Mammary epithelial cell (primary cell): ENCODE measurements at regions of chr18 and their contacts with region 1.

Region 1: DNA sequence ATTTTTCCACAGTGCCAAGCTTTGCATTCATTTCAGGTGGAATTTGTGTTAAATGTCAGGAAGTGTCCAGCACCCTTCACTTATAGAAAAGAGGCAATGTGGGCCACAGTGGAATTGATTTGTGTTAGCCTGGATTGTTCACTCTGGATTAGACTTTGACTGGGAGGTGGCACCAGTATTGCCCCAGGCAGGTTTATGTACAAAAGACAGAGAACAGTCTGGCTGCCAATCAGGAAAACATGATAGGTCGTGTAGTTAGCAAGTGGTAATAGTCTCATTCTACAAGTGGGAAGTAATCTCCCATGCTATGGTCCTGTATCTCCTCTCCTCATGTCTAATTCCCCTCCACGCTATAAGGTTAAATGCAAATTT is 45.6 kb downstream of the RAB27B start:
- DNase-seq: peak; percentile 5
- H3K4me3 ChIP-seq: no peak overlapping the region
- H3K27ac ChIP-seq: no peak overlapping the region
- H3K4me1 ChIP-seq: peaks cover 5% of the 10 kb centered on the region
- H3K27me3 ChIP-seq: no peaks in the 10 kb centered on the region
- CTCF ChIP-seq: no peak

Region 2: DNA sequence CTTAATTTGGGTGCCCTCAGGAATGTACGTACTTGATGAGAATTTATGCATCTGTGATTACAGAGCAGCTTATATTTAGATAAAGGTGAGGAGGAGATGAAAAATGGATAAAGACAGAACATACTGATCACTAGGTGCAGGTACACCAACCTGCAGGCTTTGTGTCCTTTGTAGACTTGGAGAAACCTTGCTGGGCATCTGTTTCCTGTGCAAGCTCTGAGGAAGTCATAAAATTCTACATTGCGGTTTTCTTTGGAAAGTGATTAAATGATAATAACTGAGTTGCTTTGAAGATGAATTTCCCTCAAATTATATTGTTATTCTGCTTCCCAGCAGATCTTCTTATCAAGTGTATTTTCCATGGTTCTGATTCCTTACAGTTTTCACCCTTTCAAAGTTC is 37.9 kb before region 1 on chr18:
- CTCF ChIA-PET with region 1: no interaction called
- dilution Hi-C with region 1: no loop called
- in situ Hi-C with region 1: no loop called
- intact Hi-C with region 1: loop called (anchors 5 kb)
- DNase-seq: no peak
- H3K4me3 ChIP-seq: no peak overlapping the region
- H3K27ac ChIP-seq: no peak overlapping the region
- H3K4me1 ChIP-seq: peaks cover 1% of the 10 kb centered on the region
- H3K27me3 ChIP-seq: no peaks in the 10 kb centered on the region
- CTCF ChIP-seq: no peak